Activated naive CD4-positive, alpha-beta T cell treated with anti-CD3 and anti-CD28 coated beads for 36 hours (primary cell): ENCODE measurements at regions of chr12 and their contacts with region 1.

Region 1: GRCh38 chr12:68317047-68317667 is 15.0 kb downstream of the MDM1 start:
- DNase-seq: peak; percentile 69
- H3K4me3 Mint-ChIP-seq: no peak overlapping the region
- H3K27ac Mint-ChIP-seq: no peak overlapping the region
- H3K4me1 Mint-ChIP-seq: no peaks in the 10 kb centered on the region
- H3K27me3 Mint-ChIP-seq: no peaks in the 10 kb centered on the region

Region 2: DNA sequence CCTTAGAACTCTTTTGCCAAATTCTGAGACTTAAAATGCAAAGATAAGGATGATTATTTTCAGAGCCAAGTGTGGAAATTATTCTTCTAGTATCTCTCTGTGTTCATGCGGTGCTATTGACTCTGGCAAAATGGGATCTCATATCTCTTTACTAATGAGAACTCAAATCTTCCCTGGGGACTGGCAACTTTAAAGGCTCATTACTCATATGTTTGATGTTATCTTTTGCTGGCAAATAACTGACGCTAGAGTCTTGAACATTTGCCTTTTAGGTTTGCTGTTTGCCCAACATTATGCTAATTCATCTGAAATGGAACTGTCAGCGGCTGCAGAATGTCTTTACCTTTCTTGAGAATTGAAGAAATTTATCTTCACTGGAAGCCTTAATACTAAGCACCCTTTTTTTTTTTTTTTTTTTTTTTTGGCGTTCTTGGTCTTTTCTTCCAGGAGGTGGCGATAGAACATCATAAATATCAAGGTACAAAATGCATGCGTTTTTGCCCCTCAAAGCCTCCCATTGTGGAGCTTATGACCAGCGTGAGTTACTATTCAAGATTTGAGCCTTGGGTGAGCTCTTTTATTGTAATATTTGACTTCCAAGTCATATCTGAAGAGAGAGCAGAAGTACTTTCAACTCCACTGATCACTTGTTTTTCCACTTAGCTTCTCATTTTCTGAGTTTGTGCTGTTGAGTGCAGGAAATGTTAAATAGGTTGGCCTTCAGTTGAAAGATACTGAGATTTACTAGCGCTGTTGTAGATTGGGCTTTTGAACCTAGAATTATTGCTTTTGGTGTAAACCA is 961.4 kb before region 1 on chr12:
- CTCF ChIA-PET with region 1: no interaction called
- intact Hi-C with region 1: loop called (anchors 5 kb)
- DNase-seq: peak; percentile 17
- H3K4me3 Mint-ChIP-seq: no peak overlapping the region
- H3K27ac Mint-ChIP-seq: no peak overlapping the region
- H3K4me1 Mint-ChIP-seq: peaks cover 25% of the 10 kb centered on the region
- H3K27me3 Mint-ChIP-seq: no peaks in the 10 kb centered on the region

Region 3: GRCh38 chr12:68001486-68002466 is 315.4 kb before region 1 on chr12:
- CTCF ChIA-PET with region 1: no interaction called
- intact Hi-C with region 1: loop called (anchors 1 kb)
- DNase-seq: no peak
- H3K4me3 Mint-ChIP-seq: no peak overlapping the region
- H3K27ac Mint-ChIP-seq: no peak overlapping the region
- H3K4me1 Mint-ChIP-seq: peaks cover 13% of the 10 kb centered on the region
- H3K27me3 Mint-ChIP-seq: no peaks in the 10 kb centered on the region

Region 4: DNA sequence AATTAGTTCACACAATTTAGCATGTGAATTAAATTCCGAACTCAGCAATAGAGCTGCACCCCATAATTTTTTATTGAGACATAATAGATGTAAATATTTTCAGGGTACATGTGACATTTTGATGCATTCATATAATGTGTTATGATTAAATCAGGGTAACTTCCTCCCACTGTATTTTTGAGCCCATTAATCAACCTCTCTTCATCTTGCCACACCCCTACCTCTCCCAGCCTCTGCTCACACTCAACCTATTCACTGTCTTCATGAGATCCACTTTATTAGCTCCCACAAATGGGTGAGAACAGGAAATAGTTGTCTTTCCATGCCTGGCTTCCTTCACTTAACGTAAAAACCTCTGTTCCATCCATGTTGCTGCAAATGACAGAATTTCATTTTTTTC is 106.3 kb before region 1 on chr12:
- CTCF ChIA-PET with region 1: interaction called, 10 read pairs
- intact Hi-C with region 1: no loop called
- DNase-seq: no peak
- H3K4me3 Mint-ChIP-seq: no peak overlapping the region
- H3K27ac Mint-ChIP-seq: no peak overlapping the region
- H3K4me1 Mint-ChIP-seq: peaks cover 8% of the 10 kb centered on the region
- H3K27me3 Mint-ChIP-seq: no peaks in the 10 kb centered on the region

Region 5: GRCh38 chr12:68236421-68237059 is 80.6 kb before region 1 on chr12:
- CTCF ChIA-PET with region 1: interaction called, 16 read pairs
- intact Hi-C with region 1: loop called (anchors 1 kb)
- DNase-seq: peak; percentile 43
- H3K4me3 Mint-ChIP-seq: peak overlapping the region; percentile 75
- H3K27ac Mint-ChIP-seq: peak overlapping the region; percentile 57
- H3K4me1 Mint-ChIP-seq: peaks cover 48% of the 10 kb centered on the region
- H3K27me3 Mint-ChIP-seq: no peaks in the 10 kb centered on the region

Region 6: GRCh38 chr12:68259318-68259940 is 57.7 kb before region 1 on chr12:
- CTCF ChIA-PET with region 1: interaction called, 10 read pairs
- intact Hi-C with region 1: no loop called
- DNase-seq: peak; percentile 50
- H3K4me3 Mint-ChIP-seq: no peak overlapping the region
- H3K27ac Mint-ChIP-seq: peak overlapping the region; percentile 72
- H3K4me1 Mint-ChIP-seq: peaks cover 24% of the 10 kb centered on the region
- H3K27me3 Mint-ChIP-seq: peaks cover 16% of the 10 kb centered on the region

Region 7: GRCh38 chr12:68919581-68920239 is 602.6 kb after region 1 on chr12:
- CTCF ChIA-PET with region 1: no interaction called
- intact Hi-C with region 1: no loop called
- DNase-seq: peak; percentile 54
- H3K4me3 Mint-ChIP-seq: no peak overlapping the region
- H3K27ac Mint-ChIP-seq: no peak overlapping the region
- H3K4me1 Mint-ChIP-seq: peaks cover 28% of the 10 kb centered on the region
- H3K27me3 Mint-ChIP-seq: no peaks in the 10 kb centered on the region